Activated CD4-positive, alpha-beta memory T cell treated with anti-CD3 and anti-CD28 coated beads for 36 hours (primary cell): ENCODE measurements at regions of chr1 and their contacts with region 1.

Region 1: DNA sequence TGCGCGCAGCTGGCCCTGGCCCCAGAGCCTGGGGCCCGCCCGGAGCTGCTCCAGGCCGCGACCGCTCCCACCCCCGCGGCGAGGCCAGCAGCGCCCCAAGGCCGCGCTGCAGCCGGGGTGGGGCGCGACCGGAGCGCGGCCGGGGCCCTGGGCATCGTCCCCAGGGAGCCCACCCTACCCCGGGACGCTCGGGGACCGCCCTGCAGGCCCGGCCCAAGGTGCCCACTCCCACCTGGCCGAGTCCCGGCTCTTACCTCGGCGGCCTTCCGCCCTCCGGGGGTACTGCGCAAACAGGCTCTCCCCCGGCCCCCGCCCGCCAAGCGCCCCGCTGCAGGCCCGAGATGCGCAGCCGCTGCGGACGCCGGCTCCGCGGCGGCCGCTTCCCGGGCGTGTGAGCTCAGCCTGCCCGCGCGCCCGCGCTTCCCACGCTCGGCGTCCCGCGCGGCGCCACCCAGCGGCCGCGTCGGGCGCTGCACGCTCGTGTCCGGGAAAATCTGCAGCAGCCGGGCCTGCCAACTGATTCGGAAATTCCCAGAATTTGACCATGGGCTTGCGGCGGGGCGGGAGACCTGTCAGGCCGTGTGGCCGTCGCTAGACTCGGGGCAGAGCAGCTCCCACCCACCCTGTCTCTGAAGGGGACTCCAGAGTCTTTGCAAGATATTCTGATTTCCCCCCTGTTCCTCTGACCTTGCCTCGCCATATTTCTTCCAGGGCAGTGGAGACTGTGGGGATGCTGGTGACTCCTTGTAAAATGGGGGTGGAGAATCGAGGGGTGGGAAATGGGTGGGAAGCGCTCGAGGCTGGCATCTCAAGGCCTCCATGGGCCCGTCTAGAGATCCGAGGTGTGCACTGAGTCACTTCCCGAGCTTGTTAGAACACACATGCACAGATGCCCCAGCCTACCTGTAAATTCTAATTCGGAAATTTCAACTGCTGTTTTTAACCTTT is 41.9 kb downstream of the CD34 start:
- DNase-seq: peak; percentile 81
- H3K4me3 Mint-ChIP-seq: peak overlapping the region; percentile 90
- H3K27ac Mint-ChIP-seq: peak overlapping the region; percentile 89
- H3K4me1 Mint-ChIP-seq: peaks cover 82% of the 10 kb centered on the region
- H3K27me3 Mint-ChIP-seq: no peaks in the 10 kb centered on the region

Region 2: GRCh38 chr1:207751790-207752455 is 117.1 kb before region 1 on chr1 and contains the start of gene CD46:
- CTCF ChIA-PET with region 1: interaction called, 5 read pairs
- POLR2A ChIA-PET with region 1: interaction called, 4 read pairs
- intact Hi-C with region 1: loop called (anchors 5 kb)
- DNase-seq: peak; percentile 97
- H3K4me3 Mint-ChIP-seq: peak within 1 kb of the TSS; percentile 94
- H3K27ac Mint-ChIP-seq: peak within 1 kb of the TSS; percentile 96
- H3K4me1 Mint-ChIP-seq: peaks cover 60% of the 10 kb centered on the region
- H3K27me3 Mint-ChIP-seq: no peaks in the 10 kb centered on the region
- total RNA-seq, gene CD46: 94.6 to 96.9 TPM

Region 3: GRCh38 chr1:207762622-207763021 is 106.4 kb before region 1 on chr1:
- CTCF ChIA-PET with region 1: no interaction called
- POLR2A ChIA-PET with region 1: no interaction called
- intact Hi-C with region 1: no loop called
- DNase-seq: no peak
- H3K4me3 Mint-ChIP-seq: no peak overlapping the region
- H3K27ac Mint-ChIP-seq: no peak overlapping the region
- H3K4me1 Mint-ChIP-seq: peaks cover 6% of the 10 kb centered on the region
- H3K27me3 Mint-ChIP-seq: no peaks in the 10 kb centered on the region

Region 4: GRCh38 chr1:207811920-207812720 is 56.9 kb before region 1 on chr1:
- CTCF ChIA-PET with region 1: interaction called, 13 read pairs
- POLR2A ChIA-PET with region 1: no interaction called
- intact Hi-C with region 1: no loop called
- DNase-seq: no peak
- H3K4me3 Mint-ChIP-seq: no peak overlapping the region
- H3K27ac Mint-ChIP-seq: peak overlapping the region; percentile 74
- H3K4me1 Mint-ChIP-seq: peaks cover 86% of the 10 kb centered on the region
- H3K27me3 Mint-ChIP-seq: no peaks in the 10 kb centered on the region

Region 5: DNA sequence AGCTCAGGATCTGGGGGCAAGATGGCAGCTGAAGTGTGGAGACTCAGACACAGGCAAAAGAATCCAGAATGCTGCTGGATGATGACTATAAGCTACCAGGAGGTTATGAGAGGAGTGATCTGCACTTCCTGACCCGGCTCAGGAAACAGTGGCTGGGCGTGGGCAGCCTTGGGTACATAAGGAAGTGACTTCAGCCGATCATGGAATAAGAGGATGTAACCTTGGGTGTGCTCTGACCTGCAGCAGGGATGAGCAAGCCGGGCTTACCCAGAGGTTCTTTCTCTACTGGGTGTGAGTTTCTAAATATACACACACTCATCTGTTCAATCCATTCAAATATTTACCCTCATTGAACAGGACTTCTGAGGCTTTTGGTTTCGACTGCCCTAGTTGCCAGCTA is 20.8 kb before region 1 on chr1:
- CTCF ChIA-PET with region 1: interaction called, 43 read pairs
- POLR2A ChIA-PET with region 1: interaction called, 5 read pairs
- intact Hi-C with region 1: loop called (anchors 1 kb)
- DNase-seq: peak; percentile 86
- H3K4me3 Mint-ChIP-seq: peak overlapping the region; percentile 1
- H3K27ac Mint-ChIP-seq: peak overlapping the region; percentile 75
- H3K4me1 Mint-ChIP-seq: peaks cover 67% of the 10 kb centered on the region
- H3K27me3 Mint-ChIP-seq: no peaks in the 10 kb centered on the region

Region 6: DNA sequence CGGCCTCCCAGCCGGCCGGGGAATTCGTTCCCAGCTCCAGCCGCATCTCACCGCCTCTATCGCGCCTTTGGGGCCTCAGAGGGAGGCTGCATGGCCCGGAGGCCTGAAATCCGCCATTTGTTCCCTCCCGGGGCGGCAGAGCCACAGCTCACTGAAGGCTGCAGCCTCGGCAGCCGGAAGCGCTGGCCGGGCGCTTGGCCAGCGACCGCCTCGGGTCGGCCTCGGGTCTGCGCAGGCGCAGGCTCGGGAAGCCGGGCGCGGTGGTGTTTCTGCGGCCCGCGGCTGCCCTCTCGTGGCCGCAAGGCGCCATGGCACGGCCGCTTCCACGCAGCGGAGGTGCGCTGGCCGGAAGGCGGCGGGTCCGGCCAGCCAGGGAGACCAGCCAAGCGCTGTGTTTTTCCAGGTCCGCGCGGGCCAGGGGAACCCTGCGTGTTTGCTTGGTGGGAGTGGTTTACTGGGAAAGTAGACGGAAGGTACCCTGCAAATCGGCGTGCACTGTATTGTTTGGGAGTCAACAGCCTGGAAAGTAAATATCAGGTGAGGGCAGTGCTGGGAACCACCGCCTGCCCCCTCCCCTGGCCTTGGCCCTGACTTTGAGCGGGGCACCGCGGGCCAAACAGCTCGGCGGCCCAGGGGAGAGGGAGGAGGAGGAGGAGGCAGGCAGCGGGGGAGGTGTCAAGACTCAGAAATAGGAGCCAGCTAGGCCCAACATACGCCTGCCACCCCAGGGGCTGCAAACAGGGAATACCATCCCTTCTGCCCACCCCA is 94.6 kb after region 1 on chr1:
- CTCF ChIA-PET with region 1: interaction called, 24 read pairs
- POLR2A ChIA-PET with region 1: interaction called, 3 read pairs
- intact Hi-C with region 1: no loop called
- DNase-seq: peak; percentile 89
- H3K4me3 Mint-ChIP-seq: peak overlapping the region; percentile 81
- H3K27ac Mint-ChIP-seq: no peak overlapping the region
- H3K4me1 Mint-ChIP-seq: peaks cover 9% of the 10 kb centered on the region
- H3K27me3 Mint-ChIP-seq: peaks cover 24% of the 10 kb centered on the region